ENCODE measurements at regions of chr2 and their contacts with region 1.

Region 1: GRCh38 chr2:219689676-219690628 is 62.5 kb downstream of the SLC4A3 start:
- DNase-seq: peak; percentile 78
- H3K4me3 Mint-ChIP-seq: peak overlapping the region; percentile 57
- H3K27ac Mint-ChIP-seq: peak overlapping the region; percentile 89
- H3K4me1 Mint-ChIP-seq: peaks cover 31% of the 10 kb centered on the region
- H3K27me3 Mint-ChIP-seq: no peaks in the 10 kb centered on the region
- CTCF ChIP-seq: peak; percentile 73

Region 2: GRCh38 chr2:219402665-219403515 is 287.1 kb before region 1 on chr2:
- CTCF ChIA-PET with region 1: interaction called, 8 read pairs
- POLR2A ChIA-PET with region 1: no interaction called
- intact Hi-C with region 1: loop called (anchors 5 kb)
- DNase-seq: peak; percentile 85
- H3K4me3 Mint-ChIP-seq: no peak overlapping the region
- H3K27ac Mint-ChIP-seq: no peak overlapping the region
- H3K4me1 Mint-ChIP-seq: peaks cover 6% of the 10 kb centered on the region
- H3K27me3 Mint-ChIP-seq: no peaks in the 10 kb centered on the region
- CTCF ChIP-seq: peak; percentile 86

Region 3: GRCh38 chr2:219498280-219499057 is 191.5 kb before region 1 on chr2 and contains the start of gene GMPPA:
- CTCF ChIA-PET with region 1: interaction called, 5 read pairs
- POLR2A ChIA-PET with region 1: interaction called, 13 read pairs
- intact Hi-C with region 1: no loop called
- DNase-seq: peak; percentile 99
- H3K4me3 Mint-ChIP-seq: peak within 1 kb of the TSS; percentile 92
- H3K27ac Mint-ChIP-seq: peak within 1 kb of the TSS; percentile 93
- H3K4me1 Mint-ChIP-seq: peaks cover 24% of the 10 kb centered on the region
- H3K27me3 Mint-ChIP-seq: no peaks in the 10 kb centered on the region
- CTCF ChIP-seq: no peak
- total RNA-seq, gene GMPPA: 70.7 and 80.2 TPM in 2 replicates

Region 4: DNA sequence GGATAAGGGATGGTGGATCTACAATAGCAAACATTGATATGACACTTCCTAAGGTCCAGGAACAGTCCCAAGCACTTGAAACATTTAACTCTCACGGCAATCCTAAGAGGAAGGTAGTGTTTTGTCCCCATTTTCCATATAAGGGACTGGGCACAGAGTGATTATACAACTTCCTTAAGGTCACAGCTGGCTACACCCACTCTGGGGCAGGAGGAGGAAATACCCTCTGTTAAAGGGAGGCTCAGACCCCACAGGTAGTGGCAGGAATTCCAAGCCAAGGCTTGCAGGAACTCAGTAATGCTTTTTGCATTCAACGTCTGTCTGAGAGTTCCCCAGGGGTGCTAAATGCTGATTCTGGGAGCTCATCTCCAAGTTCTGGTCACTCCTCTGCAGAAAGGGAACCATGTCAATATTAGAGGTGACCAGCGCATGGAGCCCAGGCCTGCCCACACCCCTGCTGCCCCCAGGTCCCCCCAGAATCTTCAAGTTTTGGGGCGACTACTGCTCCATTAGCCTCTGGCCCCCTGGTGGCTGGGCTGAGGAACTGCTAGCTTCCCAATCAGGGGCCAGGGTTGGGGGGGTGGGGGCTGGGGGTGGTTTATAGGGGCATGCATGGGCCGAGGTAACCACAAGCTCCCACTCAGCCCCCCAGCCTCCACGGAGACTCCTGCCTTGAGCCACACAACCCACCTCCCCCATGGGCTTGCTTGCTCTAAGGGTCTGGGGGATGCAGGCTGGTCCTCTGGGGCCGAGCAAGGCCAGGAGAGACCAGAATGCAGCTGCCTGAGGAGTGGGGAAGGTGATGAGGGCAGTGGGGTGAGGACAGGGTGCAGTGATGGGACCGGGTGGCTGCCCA is 129.7 kb before region 1 on chr2:
- CTCF ChIA-PET with region 1: interaction called, 22 read pairs
- POLR2A ChIA-PET with region 1: no interaction called
- intact Hi-C with region 1: no loop called
- DNase-seq: no peak
- H3K4me3 Mint-ChIP-seq: no peak overlapping the region
- H3K27ac Mint-ChIP-seq: no peak overlapping the region
- H3K4me1 Mint-ChIP-seq: no peaks in the 10 kb centered on the region
- H3K27me3 Mint-ChIP-seq: no peaks in the 10 kb centered on the region
- CTCF ChIP-seq: peak; percentile 80

Region 5: GRCh38 chr2:219597552-219598307 is 92.2 kb before region 1 on chr2 and contains the start of gene STK11IP:
- CTCF ChIA-PET with region 1: interaction called, 10 read pairs
- POLR2A ChIA-PET with region 1: interaction called, 20 read pairs
- intact Hi-C with region 1: loop called (anchors 5 kb)
- DNase-seq: peak; percentile 98
- H3K4me3 Mint-ChIP-seq: peak within 1 kb of the TSS; percentile 96
- H3K27ac Mint-ChIP-seq: peak within 1 kb of the TSS; percentile 98
- H3K4me1 Mint-ChIP-seq: no peaks in the 10 kb centered on the region
- H3K27me3 Mint-ChIP-seq: no peaks in the 10 kb centered on the region
- CTCF ChIP-seq: no peak
- total RNA-seq, gene STK11IP: 24.2 and 26.5 TPM in 2 replicates

Region 6: DNA sequence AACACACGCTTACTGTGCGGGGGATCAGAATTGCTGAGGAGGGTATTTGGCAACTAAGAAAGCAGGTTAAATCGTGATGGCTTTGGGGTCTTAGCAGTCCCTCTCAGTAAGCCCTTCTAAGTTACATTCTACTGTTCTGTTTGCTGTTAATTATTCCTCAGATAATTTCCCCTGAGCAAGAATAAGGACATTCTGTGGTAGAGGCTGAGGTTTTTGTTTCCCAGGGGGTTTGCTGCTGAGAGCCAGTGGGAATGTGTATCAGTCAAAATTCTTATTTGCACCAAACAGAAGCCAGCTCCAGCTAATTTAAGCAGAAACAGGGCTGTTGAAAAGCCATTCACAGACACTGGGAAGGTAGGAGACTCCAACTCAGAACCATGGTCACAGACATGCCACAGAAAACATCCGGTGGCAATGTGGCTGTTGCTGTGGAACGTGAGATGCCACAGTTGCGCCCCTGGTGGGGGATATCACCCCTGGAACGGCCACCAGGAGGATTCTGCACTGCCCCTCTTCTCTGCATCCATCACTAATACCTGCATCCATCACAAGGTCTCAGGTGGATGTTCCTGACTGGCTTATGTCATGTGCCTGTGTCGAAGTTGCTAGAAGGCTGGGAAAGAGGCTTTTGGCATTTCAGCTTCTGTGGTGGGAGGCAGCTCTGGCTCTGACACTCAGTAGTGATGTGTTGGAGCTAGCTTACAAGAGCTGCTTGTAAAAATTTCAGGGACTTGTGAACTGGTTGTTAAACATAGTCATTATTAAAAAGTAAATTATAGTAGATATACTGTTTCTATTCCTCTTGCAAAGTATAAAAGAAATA is 39.3 kb before region 1 on chr2:
- CTCF ChIA-PET with region 1: interaction called, 220 read pairs
- POLR2A ChIA-PET with region 1: interaction called, 64 read pairs
- intact Hi-C with region 1: no loop called
- DNase-seq: no peak
- H3K4me3 Mint-ChIP-seq: no peak overlapping the region
- H3K27ac Mint-ChIP-seq: no peak overlapping the region
- H3K4me1 Mint-ChIP-seq: peaks cover 5% of the 10 kb centered on the region
- H3K27me3 Mint-ChIP-seq: no peaks in the 10 kb centered on the region
- CTCF ChIP-seq: no peak

Region 7: GRCh38 chr2:219701847-219702634 is 12.1 kb after region 1 on chr2:
- CTCF ChIA-PET with region 1: interaction called, 77 read pairs
- POLR2A ChIA-PET with region 1: interaction called, 20 read pairs
- intact Hi-C with region 1: no loop called
- DNase-seq: peak; percentile 63
- H3K4me3 Mint-ChIP-seq: no peak overlapping the region
- H3K27ac Mint-ChIP-seq: no peak overlapping the region
- H3K4me1 Mint-ChIP-seq: peaks cover 20% of the 10 kb centered on the region
- H3K27me3 Mint-ChIP-seq: no peaks in the 10 kb centered on the region
- CTCF ChIP-seq: no peak

Region 8: GRCh38 chr2:220127311-220127710 is 437.4 kb after region 1 on chr2:
- CTCF ChIA-PET with region 1: no interaction called
- POLR2A ChIA-PET with region 1: no interaction called
- intact Hi-C with region 1: no loop called
- DNase-seq: no peak
- H3K4me3 Mint-ChIP-seq: no peak overlapping the region
- H3K27ac Mint-ChIP-seq: no peak overlapping the region
- H3K4me1 Mint-ChIP-seq: no peaks in the 10 kb centered on the region
- H3K27me3 Mint-ChIP-seq: no peaks in the 10 kb centered on the region
- CTCF ChIP-seq: no peak

Measured in MCF 10A (cell line).